PC-3 (cell line): ENCODE measurements at regions of chr2 and their contacts with region 1.

Region 1: DNA sequence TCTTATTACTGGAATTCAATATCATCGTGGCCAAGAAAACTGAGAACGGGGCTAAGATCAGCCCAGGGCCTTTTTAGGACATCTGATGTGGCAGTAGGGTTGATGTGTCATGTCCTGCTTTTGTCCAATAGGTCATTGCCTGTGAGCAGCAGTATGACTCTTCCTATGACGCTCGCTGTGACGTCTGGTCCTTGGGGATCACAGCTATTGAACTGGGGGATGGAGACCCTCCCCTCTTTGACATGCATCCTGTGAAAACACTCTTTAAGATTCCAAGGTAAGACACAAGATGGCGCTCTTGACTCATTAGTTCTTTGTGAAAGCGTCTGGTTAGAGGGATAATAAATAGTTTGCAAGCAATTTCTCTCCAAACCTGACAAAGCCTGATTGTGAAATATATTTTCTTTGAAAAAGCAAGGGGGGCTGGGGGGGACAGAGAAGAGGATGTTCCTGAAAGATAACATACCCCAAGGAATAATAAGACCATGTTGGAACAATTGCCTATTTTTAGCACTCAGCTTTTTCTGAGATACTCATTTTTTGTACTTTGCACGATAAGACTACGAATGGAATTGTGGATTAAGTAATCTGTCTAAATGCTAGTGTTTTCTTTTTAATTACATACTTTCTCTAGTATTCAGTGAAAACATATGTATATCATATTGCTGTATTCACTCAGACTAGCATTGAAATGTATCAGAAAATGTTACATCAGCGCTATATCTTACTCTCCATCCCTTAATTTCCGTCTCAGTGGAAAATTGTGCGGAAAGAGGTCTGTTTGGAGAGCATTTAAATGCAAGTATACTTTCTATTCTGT is 58.1 kb downstream of the MYO3B start:
- DNase-seq: peak; percentile 84
- ATAC-seq: peak; percentile 51; the same call in 1 of the 2 replicates
- H3K4me3 ChIP-seq: no peak overlapping the region
- H3K27ac ChIP-seq: no peak overlapping the region
- H3K4me1 ChIP-seq: peaks cover 13% of the 10 kb centered on the region
- H3K27me3 ChIP-seq: no peaks in the 10 kb centered on the region
- CTCF ChIP-seq: peak; percentile 87

Region 2: GRCh38 chr2:169933124-169933711 is 302.9 kb before region 1 on chr2:
- CTCF ChIA-PET with region 1: no interaction called
- POLR2A ChIA-PET with region 1: no interaction called
- intact Hi-C with region 1: loop called (anchors 2 kb)
- DNase-seq: peak; percentile 70
- ATAC-seq: peak; percentile 37; the same call in 1 of the 2 replicates
- H3K4me3 ChIP-seq: no peak overlapping the region
- H3K27ac ChIP-seq: no peak overlapping the region
- H3K4me1 ChIP-seq: no peaks in the 10 kb centered on the region
- H3K27me3 ChIP-seq: no peaks in the 10 kb centered on the region
- CTCF ChIP-seq: peak; percentile 77

Region 3: GRCh38 chr2:169945515-169945914 is 290.6 kb before region 1 on chr2:
- CTCF ChIA-PET with region 1: no interaction called
- POLR2A ChIA-PET with region 1: interaction called, 15 read pairs
- intact Hi-C with region 1: no loop called
- DNase-seq: no peak
- ATAC-seq: no peak
- H3K4me3 ChIP-seq: no peak overlapping the region
- H3K27ac ChIP-seq: no peak overlapping the region
- H3K4me1 ChIP-seq: no peaks in the 10 kb centered on the region
- H3K27me3 ChIP-seq: no peaks in the 10 kb centered on the region
- CTCF ChIP-seq: no peak

Region 4: DNA sequence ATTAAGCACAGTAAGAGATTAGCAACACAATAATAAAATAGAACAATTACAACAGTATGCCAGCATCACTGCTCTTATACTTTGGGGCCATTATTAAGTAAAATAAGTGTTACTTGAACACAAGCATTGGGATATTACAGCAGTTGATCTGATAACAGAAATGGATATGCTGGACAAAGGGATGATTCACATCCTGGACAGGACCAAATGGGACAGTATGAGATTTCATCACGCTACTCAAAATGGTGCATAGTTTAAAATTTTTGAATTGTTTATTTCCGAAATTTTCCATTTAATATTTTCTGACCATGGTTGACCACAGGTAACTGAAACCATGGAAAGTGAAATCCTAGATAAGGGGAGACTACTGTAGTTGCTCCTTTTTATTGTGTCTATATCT is 270.6 kb before region 1 on chr2:
- CTCF ChIA-PET with region 1: no interaction called
- POLR2A ChIA-PET with region 1: no interaction called
- intact Hi-C with region 1: no loop called
- DNase-seq: no peak
- ATAC-seq: no peak
- H3K4me3 ChIP-seq: no peak overlapping the region
- H3K27ac ChIP-seq: no peak overlapping the region
- H3K4me1 ChIP-seq: no peaks in the 10 kb centered on the region
- H3K27me3 ChIP-seq: no peaks in the 10 kb centered on the region
- CTCF ChIP-seq: no peak

Region 5: GRCh38 chr2:170054997-170055396 is 181.1 kb before region 1 on chr2:
- CTCF ChIA-PET with region 1: no interaction called
- POLR2A ChIA-PET with region 1: no interaction called
- intact Hi-C with region 1: no loop called
- DNase-seq: no peak
- ATAC-seq: no peak
- H3K4me3 ChIP-seq: no peak overlapping the region
- H3K27ac ChIP-seq: no peak overlapping the region
- H3K4me1 ChIP-seq: peaks cover 9% of the 10 kb centered on the region; the same call in 1 of the 2 replicates
- H3K27me3 ChIP-seq: no peaks in the 10 kb centered on the region
- CTCF ChIP-seq: no peak

Region 6: GRCh38 chr2:170324640-170325046 is 88.6 kb after region 1 on chr2:
- CTCF ChIA-PET with region 1: no interaction called
- POLR2A ChIA-PET with region 1: no interaction called
- intact Hi-C with region 1: loop called (anchors 1 kb)
- DNase-seq: peak; percentile 66
- ATAC-seq: peak; percentile 63
- H3K4me3 ChIP-seq: no peak overlapping the region
- H3K27ac ChIP-seq: no peak overlapping the region
- H3K4me1 ChIP-seq: no peaks in the 10 kb centered on the region
- H3K27me3 ChIP-seq: no peaks in the 10 kb centered on the region
- CTCF ChIP-seq: peak; percentile 88

Region 7: GRCh38 chr2:170361090-170361936 is 125.2 kb after region 1 on chr2:
- CTCF ChIA-PET with region 1: interaction called, 3 read pairs
- POLR2A ChIA-PET with region 1: no interaction called
- intact Hi-C with region 1: loop called (anchors 1 kb)
- DNase-seq: peak; percentile 78
- ATAC-seq: peak; percentile 77
- H3K4me3 ChIP-seq: no peak overlapping the region
- H3K27ac ChIP-seq: no peak overlapping the region
- H3K4me1 ChIP-seq: peaks cover 15% of the 10 kb centered on the region
- H3K27me3 ChIP-seq: no peaks in the 10 kb centered on the region
- CTCF ChIP-seq: peak; percentile 90

Region 8: DNA sequence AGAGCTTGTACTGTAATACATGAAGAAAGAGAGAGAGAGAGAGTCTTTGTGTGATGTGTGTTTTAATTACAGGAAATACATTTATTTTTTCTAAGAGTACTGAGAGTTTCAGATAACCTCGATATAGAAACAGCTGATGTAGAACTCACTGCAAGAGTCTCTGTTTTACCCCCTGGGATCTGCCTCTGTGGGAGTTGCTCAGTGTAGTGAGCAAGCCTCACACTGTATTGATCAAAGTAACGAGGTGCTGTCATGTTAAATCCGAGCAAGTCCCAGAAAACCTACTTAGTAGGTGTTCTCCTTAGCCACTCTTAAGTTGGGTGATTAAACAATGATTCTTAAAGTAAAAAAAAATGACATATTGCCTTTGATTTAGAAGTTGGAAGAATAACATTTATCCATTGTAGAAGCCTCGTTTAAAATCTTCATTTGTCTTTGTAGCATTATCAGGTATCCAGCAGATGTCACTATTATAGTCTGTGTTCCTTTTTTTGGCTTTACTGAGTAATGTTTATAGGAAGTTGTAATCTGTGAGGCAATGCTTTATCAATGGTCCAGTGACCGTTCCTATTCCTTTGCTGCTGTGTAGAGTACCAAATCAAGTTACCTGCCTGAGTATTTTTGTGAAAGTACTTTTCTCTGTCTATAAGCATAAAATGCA is 160.9 kb after region 1 on chr2:
- CTCF ChIA-PET with region 1: no interaction called
- POLR2A ChIA-PET with region 1: no interaction called
- intact Hi-C with region 1: loop called (anchors 10 kb)
- DNase-seq: peak; percentile 63
- ATAC-seq: peak; percentile 68
- H3K4me3 ChIP-seq: no peak overlapping the region
- H3K27ac ChIP-seq: no peak overlapping the region
- H3K4me1 ChIP-seq: peaks cover 11% of the 10 kb centered on the region
- H3K27me3 ChIP-seq: no peaks in the 10 kb centered on the region
- CTCF ChIP-seq: peak; percentile 80